ENCODE measurements at regions of chr11 and their contacts with region 1.

Region 1: GRCh38 chr11:107928046-107928766 is at the start of gene RAB39A:
- DNase-seq: peak; percentile 70
- H3K4me3 Mint-ChIP-seq: no peak within 1 kb of the TSS
- H3K27ac Mint-ChIP-seq: no peak within 1 kb of the TSS
- H3K4me1 Mint-ChIP-seq: no peaks in the 10 kb centered on the region
- H3K27me3 Mint-ChIP-seq: peaks cover 42% of the 10 kb centered on the region
- CTCF ChIP-seq: no peak
- total RNA-seq, gene RAB39A: not detected in 2 replicates

Region 2: GRCh38 chr11:107785401-107785800 is 142.8 kb before region 1 on chr11:
- CTCF ChIA-PET with region 1: no interaction called
- intact Hi-C with region 1: no loop called
- DNase-seq: no peak
- H3K4me3 Mint-ChIP-seq: no peak overlapping the region
- H3K27ac Mint-ChIP-seq: no peak overlapping the region
- H3K4me1 Mint-ChIP-seq: no peaks in the 10 kb centered on the region
- H3K27me3 Mint-ChIP-seq: no peaks in the 10 kb centered on the region
- CTCF ChIP-seq: no peak

Region 3: DNA sequence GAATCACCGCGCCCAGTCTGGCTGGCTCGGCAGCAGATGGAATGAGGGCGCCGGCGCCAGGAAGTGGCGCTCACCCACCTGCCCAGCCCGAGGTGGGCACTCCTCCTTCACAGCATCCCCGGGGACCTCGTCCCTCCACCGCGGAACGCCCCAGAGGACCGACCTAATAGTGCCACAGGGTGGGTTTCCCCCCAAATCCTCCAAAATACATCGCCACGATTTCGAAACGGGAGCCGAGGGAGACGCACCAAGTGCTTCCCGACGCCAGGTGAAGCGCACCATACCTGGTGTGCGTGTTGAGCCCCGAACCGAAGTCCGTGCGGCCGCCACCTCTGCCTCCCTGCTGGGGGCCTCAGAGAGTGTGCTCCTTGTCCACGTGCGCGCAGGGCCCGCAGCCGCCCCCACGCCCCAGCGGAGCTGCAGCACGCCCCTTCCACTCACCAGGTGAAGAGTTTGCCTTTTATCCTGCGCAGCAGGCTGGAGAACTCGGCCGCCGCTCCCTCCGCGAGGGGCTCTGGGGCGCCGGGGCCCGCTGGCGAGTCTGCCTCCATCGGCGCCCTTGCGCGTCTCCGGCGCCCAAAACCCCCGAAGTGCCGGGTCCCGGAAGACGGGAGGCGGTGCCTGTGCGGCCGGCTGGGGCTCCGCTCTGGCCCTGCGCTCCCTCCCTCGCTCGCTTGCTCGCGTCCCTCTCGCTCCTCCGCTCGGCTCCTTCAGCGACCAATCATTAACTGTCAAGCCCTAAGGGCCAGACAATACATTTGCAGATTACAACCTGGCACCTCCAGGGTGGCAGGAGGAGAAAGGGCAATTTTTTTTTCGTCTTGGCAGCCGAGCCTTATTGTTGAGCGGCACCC is 69.8 kb before region 1 on chr11 and contains the start of gene SLC35F2:
- CTCF ChIA-PET with region 1: no interaction called
- intact Hi-C with region 1: no loop called
- DNase-seq: peak; percentile 76
- H3K4me3 Mint-ChIP-seq: peak within 1 kb of the TSS; percentile 91
- H3K27ac Mint-ChIP-seq: peak within 1 kb of the TSS; percentile 92
- H3K4me1 Mint-ChIP-seq: no peaks in the 10 kb centered on the region
- H3K27me3 Mint-ChIP-seq: no peaks in the 10 kb centered on the region
- CTCF ChIP-seq: no peak
- total RNA-seq, gene SLC35F2: 24.4 and 34.5 TPM in 2 replicates

Region 4: GRCh38 chr11:107953446-107953845 is 25.2 kb after region 1 on chr11:
- CTCF ChIA-PET with region 1: no interaction called
- intact Hi-C with region 1: loop called (anchors 1 kb)
- DNase-seq: no peak
- H3K4me3 Mint-ChIP-seq: no peak overlapping the region
- H3K27ac Mint-ChIP-seq: no peak overlapping the region
- H3K4me1 Mint-ChIP-seq: no peaks in the 10 kb centered on the region
- H3K27me3 Mint-ChIP-seq: peaks cover 29% of the 10 kb centered on the region
- CTCF ChIP-seq: no peak

Measured in Calu3 (cell line).